ENCODE measurements at regions of chr13 and their contacts with region 1.

Region 1: GRCh38 chr13:30371649-30372265 is 50.5 kb upstream of the UBE2L5 start:
- DNase-seq: peak; percentile 87 to 99 (median 97)
- H3K4me3 ChIP-seq: peak overlapping the region in 4 of 7 experiments; percentile 1 to 63 (median 31)
- H3K27ac ChIP-seq: peak overlapping the region; percentile 68 to 80
- H3K4me1 ChIP-seq: peaks cover 47 to 80% (median 79%) of the 10 kb centered on the region in 4 experiments
- H3K27me3 ChIP-seq: no peaks in the 10 kb centered on the region

Region 2: DNA sequence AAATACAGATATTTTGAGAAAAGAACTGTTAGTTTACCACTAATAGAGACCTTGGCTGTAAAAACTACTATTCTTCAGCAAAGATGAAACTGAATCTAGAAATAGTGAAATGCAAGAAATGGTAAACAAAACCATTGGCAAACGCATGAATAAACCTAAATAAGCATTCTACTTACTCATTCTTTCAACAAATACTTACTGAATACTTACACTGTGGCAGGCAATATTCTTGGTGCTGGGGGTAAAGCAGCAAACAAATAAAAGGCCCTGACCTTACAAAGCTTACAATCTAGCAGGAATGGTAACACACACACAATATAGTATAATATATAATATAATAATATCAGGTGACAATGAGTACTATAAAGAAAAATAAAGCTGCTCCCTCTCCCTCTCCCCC is 103.1 kb before region 1 on chr13:
- CTCF ChIA-PET with region 1: no interaction called
- POLR2A ChIA-PET with region 1: no interaction called
- DNase-seq: no peak
- H3K4me3 ChIP-seq: no peak overlapping the region
- H3K27ac ChIP-seq: no peak overlapping the region
- H3K4me1 ChIP-seq: no peaks in the 10 kb centered on the region
- H3K27me3 ChIP-seq: no peaks in the 10 kb centered on the region

Region 3: GRCh38 chr13:30355384-30355699 is 16.4 kb before region 1 on chr13:
- CTCF ChIA-PET with region 1: interaction called, 47 read pairs
- POLR2A ChIA-PET with region 1: interaction called, 6 read pairs
- DNase-seq: peak; percentile 81 to 84 (median 84)
- H3K4me3 ChIP-seq: peak overlapping the region in 1 of 7 experiments; percentile 8
- H3K27ac ChIP-seq: no peak overlapping the region
- H3K4me1 ChIP-seq: peaks cover 1 to 18% (median 14%) of the 10 kb centered on the region in 4 experiments
- H3K27me3 ChIP-seq: no peaks in the 10 kb centered on the region

Region 4: GRCh38 chr13:30382836-30383525 is 11.2 kb after region 1 on chr13:
- CTCF ChIA-PET with region 1: interaction called, 40 read pairs
- POLR2A ChIA-PET with region 1: interaction called, 3 read pairs
- DNase-seq: peak in 2 of 3 donors; percentile 55 to 78
- H3K4me3 ChIP-seq: peak overlapping the region in 1 of 7 experiments; percentile 45
- H3K27ac ChIP-seq: no peak overlapping the region
- H3K4me1 ChIP-seq: peaks cover under 1 to 18% (median 12%) of the 10 kb centered on the region in 4 experiments
- H3K27me3 ChIP-seq: no peaks in the 10 kb centered on the region

Region 5: GRCh38 chr13:30388406-30389283 is 16.9 kb after region 1 on chr13:
- CTCF ChIA-PET with region 1: interaction called, 40 read pairs
- POLR2A ChIA-PET with region 1: interaction called, 3 read pairs
- DNase-seq: no peak
- H3K4me3 ChIP-seq: no peak overlapping the region
- H3K27ac ChIP-seq: no peak overlapping the region
- H3K4me1 ChIP-seq: peaks cover 9 to 17% (median 11%) of the 10 kb centered on the region in 4 experiments
- H3K27me3 ChIP-seq: no peaks in the 10 kb centered on the region

Region 6: GRCh38 chr13:30395192-30396084 is 23.7 kb after region 1 on chr13:
- CTCF ChIA-PET with region 1: interaction called, 13 read pairs
- POLR2A ChIA-PET with region 1: interaction called, 3 read pairs
- DNase-seq: peak; percentile 77 to 89 (median 88)
- H3K4me3 ChIP-seq: peak overlapping the region; percentile 50 to 93 (median 73)
- H3K27ac ChIP-seq: peak overlapping the region; percentile 69 to 88
- H3K4me1 ChIP-seq: peaks cover 0 to 14% (median 8%) of the 10 kb centered on the region in 4 experiments
- H3K27me3 ChIP-seq: no peaks in the 10 kb centered on the region

Region 7: DNA sequence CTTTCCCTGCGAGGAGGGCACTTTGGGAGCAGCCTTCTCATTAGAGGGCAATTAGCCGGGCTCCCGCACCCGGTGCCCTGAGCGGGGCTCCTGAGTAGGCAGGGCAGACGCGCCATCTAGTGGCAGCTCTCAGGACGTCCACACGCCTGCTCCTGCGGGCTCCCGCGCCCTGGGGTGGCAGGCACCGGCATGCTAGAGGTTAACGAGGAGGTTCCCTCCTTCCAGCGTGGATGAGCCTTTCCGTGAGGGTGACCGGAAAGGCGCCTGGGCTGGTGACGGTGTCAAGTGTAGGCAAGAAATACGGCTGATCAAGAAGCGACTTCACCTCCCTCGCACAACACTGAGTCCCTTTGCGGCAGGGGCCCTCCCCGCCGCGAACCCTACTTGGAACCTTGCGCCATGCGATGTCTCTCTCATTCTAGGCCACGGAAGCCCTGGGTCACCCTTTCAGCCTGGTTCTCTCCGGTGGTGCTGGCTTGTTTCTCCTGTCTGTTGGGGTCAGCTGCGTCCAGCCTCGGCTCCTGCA is 431.3 kb after region 1 on chr13:
- CTCF ChIA-PET with region 1: no interaction called
- POLR2A ChIA-PET with region 1: no interaction called
- DNase-seq: peak; percentile 73 to 81 (median 77)
- H3K4me3 ChIP-seq: peak overlapping the region in 4 of 7 experiments; percentile 32 to 68 (median 57)
- H3K27ac ChIP-seq: no peak overlapping the region
- H3K4me1 ChIP-seq: peaks cover 0 to 13% (median 9%) of the 10 kb centered on the region in 4 experiments
- H3K27me3 ChIP-seq: peaks cover 0 to 3% (median 0%) of the 10 kb centered on the region in 5 experiments